Activated CD8-positive, alpha-beta T cell treated with anti-CD3 and anti-CD28 coated beads for 36 hours (primary cell): ENCODE measurements at regions of chr19 and their contacts with region 1.

Region 1: DNA sequence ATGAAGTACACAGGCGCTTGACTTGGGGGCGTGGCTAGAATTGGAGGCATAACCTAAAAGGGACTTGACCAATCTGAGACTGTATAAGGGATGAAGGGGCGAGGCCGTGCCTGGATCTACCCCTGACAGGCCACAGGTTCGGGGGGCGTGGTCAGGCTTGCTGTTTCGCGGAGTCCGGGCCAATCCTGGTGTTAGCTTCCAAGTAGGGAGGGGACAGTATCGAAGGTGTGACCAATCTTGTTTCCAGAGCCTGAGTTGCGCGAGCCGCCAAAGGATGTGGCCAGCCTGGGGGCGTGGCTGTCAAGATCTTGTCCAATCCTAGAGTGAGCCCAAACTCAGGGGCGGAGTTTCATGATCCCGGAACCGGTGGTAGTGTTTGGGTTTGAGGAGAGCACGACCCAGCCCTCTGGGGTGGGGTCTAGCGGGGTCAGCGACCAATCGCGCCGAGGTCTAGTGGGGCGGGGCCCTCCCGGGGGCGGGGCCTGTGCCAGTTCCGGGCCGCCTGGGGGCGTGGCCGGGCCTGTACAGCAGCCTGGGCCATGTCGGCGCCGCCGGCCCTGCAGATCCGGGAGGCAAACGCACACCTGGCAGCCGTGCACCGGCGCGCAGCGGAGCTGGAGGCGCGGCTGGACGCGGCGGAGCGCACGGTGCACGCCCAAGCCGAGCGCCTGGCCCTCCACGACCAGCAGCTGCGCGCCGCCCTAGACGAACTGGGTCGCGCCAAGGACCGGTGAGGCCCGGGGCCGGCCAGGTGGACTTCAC is at the start of gene VMAC:
- DNase-seq: peak; percentile 100
- ATAC-seq: peak; percentile 83
- H3K4me3 Mint-ChIP-seq: peak within 1 kb of the TSS; percentile 99
- H3K27ac Mint-ChIP-seq: peak within 1 kb of the TSS; percentile 100
- H3K4me1 Mint-ChIP-seq: peaks cover 40% of the 10 kb centered on the region
- H3K27me3 Mint-ChIP-seq: no peaks in the 10 kb centered on the region
- CTCF ChIP-seq: no peak
- total RNA-seq, gene VMAC: 1.2 to 2.5 TPM

Region 2: GRCh38 chr19:5827891-5828660 is 76.5 kb before region 1 on chr19:
- CTCF ChIA-PET with region 1: no interaction called
- POLR2A ChIA-PET with region 1: interaction called, 34 read pairs
- intact Hi-C with region 1: no loop called
- DNase-seq: peak; percentile 96
- ATAC-seq: peak; percentile 83
- H3K4me3 Mint-ChIP-seq: peak overlapping the region; percentile 89
- H3K27ac Mint-ChIP-seq: peak overlapping the region; percentile 95
- H3K4me1 Mint-ChIP-seq: peaks cover 7% of the 10 kb centered on the region
- H3K27me3 Mint-ChIP-seq: no peaks in the 10 kb centered on the region
- CTCF ChIP-seq: no peak

Region 3: DNA sequence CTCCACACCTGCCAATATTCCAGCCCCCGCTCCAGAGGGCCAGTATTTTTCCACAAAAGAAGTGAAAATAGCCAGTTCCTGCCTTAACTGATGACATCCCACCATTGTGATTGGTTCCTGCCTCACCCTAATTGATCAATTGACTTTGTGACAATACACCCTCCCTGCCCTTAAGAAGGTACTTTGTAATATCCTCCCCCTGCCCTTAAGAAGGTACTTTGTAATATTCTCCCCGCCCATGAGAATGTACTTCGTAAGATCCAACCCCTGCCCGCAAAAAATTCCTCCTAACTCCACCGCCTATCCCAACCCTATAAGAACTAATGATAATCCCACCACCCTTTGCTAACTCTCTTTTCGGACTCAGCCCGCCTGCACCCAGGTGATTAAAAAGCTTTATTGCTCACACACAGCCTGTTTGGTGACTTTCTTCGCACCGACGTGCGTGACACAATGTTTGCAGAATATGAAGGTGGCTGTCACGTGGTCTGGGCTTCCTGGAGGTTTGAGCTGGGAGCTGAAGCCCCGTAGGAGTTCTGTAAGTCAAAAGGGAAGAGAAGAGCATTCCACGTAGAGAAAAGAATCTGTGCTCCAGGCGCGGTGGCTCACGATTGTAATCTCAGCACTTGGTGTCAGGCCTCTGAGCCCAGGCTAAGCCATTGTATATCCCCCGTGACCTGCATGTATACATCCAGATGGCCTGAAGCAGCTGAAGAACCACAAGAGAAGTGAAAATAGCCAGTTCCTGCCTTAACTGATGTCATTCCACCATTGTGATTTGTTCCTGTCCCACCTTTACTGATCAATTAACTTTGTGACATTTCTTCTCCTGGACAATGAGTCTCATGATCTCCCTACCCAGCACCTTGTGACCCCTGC is 47.1 kb before region 1 on chr19:
- CTCF ChIA-PET with region 1: no interaction called
- POLR2A ChIA-PET with region 1: no interaction called
- intact Hi-C with region 1: no loop called
- DNase-seq: no peak
- ATAC-seq: no peak
- H3K4me3 Mint-ChIP-seq: no peak overlapping the region
- H3K27ac Mint-ChIP-seq: no peak overlapping the region
- H3K4me1 Mint-ChIP-seq: no peaks in the 10 kb centered on the region
- H3K27me3 Mint-ChIP-seq: no peaks in the 10 kb centered on the region
- CTCF ChIP-seq: no peak

Region 4: DNA sequence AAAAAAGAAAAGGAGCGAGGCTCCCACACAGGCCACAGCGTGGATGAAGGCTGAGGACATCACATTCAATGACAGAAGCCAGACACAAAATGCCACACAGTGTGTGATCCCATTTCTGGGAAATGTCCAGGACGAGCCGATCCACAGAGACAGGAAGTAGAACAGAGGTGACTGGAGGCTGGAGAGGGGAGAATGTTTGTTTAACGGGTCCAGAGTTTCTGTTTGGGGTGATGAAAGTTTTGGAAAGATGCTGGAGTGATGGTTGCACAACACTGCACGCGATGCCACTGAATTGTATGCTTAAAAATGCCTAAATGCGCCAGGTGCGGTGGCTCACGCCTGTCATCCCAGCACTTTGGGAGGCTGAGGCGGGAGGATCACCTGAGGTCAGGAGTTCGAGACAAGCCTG is 33.5 kb before region 1 on chr19:
- CTCF ChIA-PET with region 1: no interaction called
- POLR2A ChIA-PET with region 1: no interaction called
- intact Hi-C with region 1: no loop called
- DNase-seq: no peak
- ATAC-seq: no peak
- H3K4me3 Mint-ChIP-seq: no peak overlapping the region
- H3K27ac Mint-ChIP-seq: no peak overlapping the region
- H3K4me1 Mint-ChIP-seq: no peaks in the 10 kb centered on the region
- H3K27me3 Mint-ChIP-seq: no peaks in the 10 kb centered on the region
- CTCF ChIP-seq: no peak

Region 5: DNA sequence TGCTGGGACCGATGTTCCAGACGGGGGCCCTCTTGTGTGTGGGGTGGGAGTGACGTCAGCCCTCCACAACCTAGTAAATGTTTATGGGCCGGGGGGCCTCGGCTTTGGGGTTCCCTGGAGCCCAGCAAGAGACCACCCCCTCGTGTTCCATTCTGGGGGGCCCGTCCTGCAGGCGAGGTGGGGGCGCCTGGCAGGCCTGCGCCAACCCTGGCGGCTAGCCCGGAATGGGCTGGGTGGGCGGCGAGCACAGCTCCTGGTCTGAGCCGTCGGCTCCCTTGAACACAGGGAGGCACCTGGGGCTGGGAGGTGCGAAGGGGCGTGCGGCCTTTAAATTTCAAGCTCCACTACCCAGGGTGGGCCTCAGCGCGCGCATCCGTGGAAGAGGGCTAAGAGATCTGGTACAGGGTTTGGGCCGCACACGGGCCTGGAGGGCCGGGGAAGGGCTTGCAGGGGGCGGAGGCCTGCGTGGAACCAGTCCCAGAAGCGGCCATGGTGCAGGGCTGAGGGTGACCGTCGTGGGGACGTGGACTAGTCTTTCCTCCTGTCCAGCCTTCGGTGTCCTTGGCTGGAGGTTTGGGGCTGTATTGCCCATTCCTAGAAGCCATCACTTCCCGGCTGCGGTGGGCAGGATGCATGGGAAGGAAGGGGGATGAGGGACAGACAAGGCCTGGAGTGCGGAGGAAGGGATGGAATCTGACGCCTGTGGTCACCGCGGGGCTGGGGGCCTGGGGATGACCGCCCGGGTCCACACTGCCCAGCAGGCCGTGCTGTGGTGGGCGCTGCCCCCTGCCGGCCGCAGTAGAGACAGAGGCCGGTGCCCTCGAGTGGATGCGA is 12.4 kb before region 1 on chr19:
- CTCF ChIA-PET with region 1: interaction called, 3 read pairs
- POLR2A ChIA-PET with region 1: interaction called, 18 read pairs
- intact Hi-C with region 1: no loop called
- DNase-seq: peak; percentile 34
- ATAC-seq: peak; percentile 66
- H3K4me3 Mint-ChIP-seq: no peak overlapping the region
- H3K27ac Mint-ChIP-seq: no peak overlapping the region
- H3K4me1 Mint-ChIP-seq: no peaks in the 10 kb centered on the region
- H3K27me3 Mint-ChIP-seq: no peaks in the 10 kb centered on the region
- CTCF ChIP-seq: peak; percentile 59

Region 6: GRCh38 chr19:5977785-5978605 is 73.5 kb after region 1 on chr19 and contains the start of gene RANBP3:
- CTCF ChIA-PET with region 1: interaction called, 3 read pairs
- POLR2A ChIA-PET with region 1: interaction called, 3 read pairs
- intact Hi-C with region 1: loop called (anchors 10 kb)
- DNase-seq: peak; percentile 99
- ATAC-seq: peak; percentile 91
- H3K4me3 Mint-ChIP-seq: peak within 1 kb of the TSS; percentile 95
- H3K27ac Mint-ChIP-seq: peak within 1 kb of the TSS; percentile 92
- H3K4me1 Mint-ChIP-seq: peaks cover 53% of the 10 kb centered on the region
- H3K27me3 Mint-ChIP-seq: no peaks in the 10 kb centered on the region
- CTCF ChIP-seq: no peak
- total RNA-seq, gene RANBP3: 74.3 to 87.5 TPM